ENCODE measurements at regions of chr7 and their contacts with region 1.

Region 1: DNA sequence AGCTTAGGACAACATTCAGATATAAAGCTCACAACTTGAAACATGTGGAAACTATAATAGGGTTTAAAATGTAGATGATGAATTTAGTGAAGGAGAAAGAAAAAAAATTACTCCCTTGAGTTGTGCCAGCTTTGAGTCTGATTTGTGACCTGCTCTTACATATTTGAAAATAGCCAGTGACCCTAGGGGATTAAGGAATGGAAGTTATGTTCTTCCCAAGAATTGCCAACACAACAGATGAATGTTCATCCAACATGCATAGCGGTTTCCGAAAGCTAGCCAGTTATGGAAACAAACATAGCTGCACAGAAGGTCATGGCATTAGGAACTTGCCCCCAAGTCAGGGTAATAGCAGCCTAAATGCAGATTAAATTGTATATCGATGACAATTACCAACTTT is 10.8 kb downstream of the TMEM196 start:
- DNase-seq: no peak
- H3K4me3 ChIP-seq: no peak overlapping the region
- H3K27ac ChIP-seq: no peak overlapping the region
- H3K4me1 ChIP-seq: no peaks in the 10 kb centered on the region
- H3K27me3 ChIP-seq: no peaks in the 10 kb centered on the region
- CTCF ChIP-seq: no peak
- POLR2A ChIP-seq: no peak

Region 2: DNA sequence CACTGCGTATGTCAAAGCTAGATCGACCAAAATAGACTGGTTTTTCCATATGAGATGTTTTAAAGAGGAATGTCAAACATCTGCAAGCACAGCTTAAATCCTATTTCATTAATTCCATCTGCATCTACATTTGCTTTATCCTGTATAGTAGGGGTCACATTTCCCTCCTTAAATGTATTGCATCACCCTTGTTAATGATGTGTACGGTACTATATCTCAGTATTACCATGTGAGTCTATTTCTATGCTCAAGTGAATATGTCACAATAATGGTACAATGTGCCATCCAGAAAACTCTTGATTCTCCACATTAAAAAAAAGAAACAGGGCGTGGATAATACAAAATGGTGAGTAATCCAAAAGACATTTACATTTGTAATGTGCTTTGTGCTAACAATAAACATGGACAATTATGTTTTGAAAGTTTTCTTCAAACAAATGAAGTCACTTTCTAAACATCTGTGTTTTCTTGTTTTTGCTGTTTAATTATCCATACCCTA is 701.8 kb before region 1 on chr7:
- intact Hi-C with region 1: no loop called
- DNase-seq: no peak
- H3K4me3 ChIP-seq: no peak overlapping the region
- H3K27ac ChIP-seq: no peak overlapping the region
- H3K4me1 ChIP-seq: no peaks in the 10 kb centered on the region
- H3K27me3 ChIP-seq: no peaks in the 10 kb centered on the region
- CTCF ChIP-seq: no peak
- POLR2A ChIP-seq: no peak

Region 3: GRCh38 chr7:19698331-19698730 is 64.3 kb before region 1 on chr7:
- intact Hi-C with region 1: no loop called
- DNase-seq: no peak
- H3K4me3 ChIP-seq: no peak overlapping the region
- H3K27ac ChIP-seq: no peak overlapping the region
- H3K4me1 ChIP-seq: no peaks in the 10 kb centered on the region
- H3K27me3 ChIP-seq: no peaks in the 10 kb centered on the region
- CTCF ChIP-seq: no peak
- POLR2A ChIP-seq: no peak

Region 4: DNA sequence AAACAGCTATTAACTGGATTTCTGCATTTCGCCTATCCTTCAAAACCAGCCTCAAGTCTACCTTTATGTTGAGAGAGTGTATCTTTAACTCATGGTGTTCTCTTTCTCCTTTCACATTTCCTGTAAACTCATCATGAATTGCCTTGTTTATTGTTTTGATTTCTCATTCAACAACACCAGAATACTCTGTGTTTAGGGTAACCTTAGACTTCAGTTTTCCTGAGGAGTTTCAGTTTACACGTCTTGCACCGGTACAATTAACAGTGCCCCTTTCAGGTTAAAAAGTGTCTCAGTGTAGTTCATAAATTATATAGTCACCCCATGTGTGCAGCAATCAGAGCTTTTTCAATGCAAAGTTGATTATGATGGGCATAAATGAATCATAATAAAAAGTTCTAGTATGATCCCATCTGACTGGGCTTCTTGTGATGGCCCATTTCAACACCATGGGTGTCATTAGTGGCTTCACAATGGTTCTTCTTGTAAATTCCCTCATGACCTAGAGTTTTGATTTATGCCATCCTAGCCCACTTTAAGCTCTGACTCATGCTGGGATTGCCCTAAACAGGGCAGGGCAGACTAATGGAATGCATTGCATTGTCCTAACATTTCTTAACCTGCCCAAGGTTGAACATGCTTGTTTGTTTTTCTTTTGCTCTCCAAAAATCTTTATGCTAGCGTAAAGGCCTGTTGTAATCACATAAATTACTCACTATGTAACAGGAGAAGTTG is 590.1 kb after region 1 on chr7:
- intact Hi-C with region 1: loop called (anchors 5 kb)
- DNase-seq: peak in 1 of 2 donors; percentile 57
- H3K4me3 ChIP-seq: no peak overlapping the region
- H3K27ac ChIP-seq: peak overlapping the region; percentile 77 to 85
- H3K4me1 ChIP-seq: peaks cover 0 to 5% of the 10 kb centered on the region in 2 donors
- H3K27me3 ChIP-seq: no peaks in the 10 kb centered on the region
- CTCF ChIP-seq: no peak
- POLR2A ChIP-seq: no peak